ENCODE measurements at regions of chr19 and their contacts with region 1.

Region 1: DNA sequence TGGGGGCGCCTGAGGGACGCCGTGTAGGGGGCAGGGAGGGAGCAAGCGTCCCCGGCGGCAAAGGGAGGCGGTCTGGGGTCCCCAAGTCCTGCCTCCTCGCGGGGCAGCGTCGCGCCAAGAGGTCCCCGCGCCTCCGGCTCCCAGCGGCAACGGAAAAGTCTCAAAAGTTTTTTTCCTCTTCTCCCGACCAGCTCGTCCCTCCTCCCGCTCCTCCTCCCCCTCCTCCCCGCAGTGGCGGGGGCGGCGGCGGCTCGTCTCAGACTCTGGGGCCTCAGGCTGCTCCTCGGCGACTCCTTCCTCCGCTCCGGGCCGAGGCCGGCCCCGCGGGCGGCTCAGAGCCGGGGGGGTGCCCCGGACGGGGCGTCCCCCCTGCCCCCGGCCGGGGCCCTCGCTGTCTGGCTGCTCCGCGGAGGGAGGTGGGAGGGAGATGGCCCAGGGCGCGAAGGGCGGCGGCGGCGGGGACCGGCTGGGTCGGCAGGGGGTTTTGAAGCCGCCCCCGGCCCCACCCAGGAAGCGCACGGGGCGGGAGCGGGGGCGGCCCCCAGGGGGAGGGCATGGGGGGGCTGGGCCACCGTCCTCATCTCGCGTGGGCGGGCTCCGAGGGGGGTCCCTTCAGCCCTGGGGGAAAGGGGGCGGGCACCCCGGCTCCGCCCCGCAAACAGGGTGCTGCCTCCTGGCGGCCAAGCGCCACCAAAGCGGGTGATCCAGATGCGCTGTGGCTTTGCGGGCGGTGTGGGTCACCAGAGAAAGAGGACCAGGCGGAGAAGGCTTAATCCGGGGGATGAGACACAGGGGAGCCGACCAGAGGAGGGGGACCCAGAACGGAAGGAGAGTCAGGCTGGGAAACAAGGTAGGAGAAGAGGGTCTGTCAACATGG is at the start of gene TGFB1:
- DNase-seq: peak; percentile 89 to 91
- ATAC-seq: peak; percentile 59 to 85 (median 74)
- H3K4me3 ChIP-seq: peak within 1 kb of the TSS; percentile 63 to 98 (median 79)
- H3K27ac ChIP-seq: peak within 1 kb of the TSS; percentile 81 to 98 (median 92)
- H3K4me1 ChIP-seq: peaks cover 0 to 73% (median 43%) of the 10 kb centered on the region in 9 donors
- H3K27me3 ChIP-seq: peaks cover 0 to 5% (median 0%) of the 10 kb centered on the region in 7 donors
- CTCF ChIP-seq: peak; percentile 78 to 98 (median 91)
- total RNA-seq, gene TGFB1: 9.7 to 44.9 (median 13.2) TPM

Region 2: DNA sequence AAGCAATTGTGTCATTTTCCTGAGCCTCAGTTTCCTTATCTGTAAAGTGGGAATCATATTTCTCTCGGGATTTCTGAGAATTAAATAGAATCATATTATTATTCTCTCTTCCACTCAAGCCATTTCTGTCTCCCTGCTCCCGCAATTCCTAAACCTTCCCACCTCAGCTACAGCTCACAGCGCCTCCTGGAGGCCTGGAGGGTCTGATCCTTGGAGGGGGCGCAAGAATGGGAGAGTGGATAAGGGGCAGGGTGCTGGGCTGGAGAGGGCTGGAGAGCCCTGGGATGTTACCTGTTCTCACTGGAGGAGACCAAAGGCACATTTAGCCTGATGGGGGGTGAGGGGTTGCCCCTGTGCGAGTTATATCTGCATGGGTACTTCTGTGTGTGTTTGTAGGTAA is 191.8 kb before region 1 on chr19:
- intact Hi-C with region 1: no loop called
- DNase-seq: no peak
- ATAC-seq: no peak
- H3K4me3 ChIP-seq: no peak overlapping the region
- H3K27ac ChIP-seq: no peak overlapping the region
- H3K4me1 ChIP-seq: no peaks in the 10 kb centered on the region
- H3K27me3 ChIP-seq: no peaks in the 10 kb centered on the region
- CTCF ChIP-seq: peak in 1 of 9 donors; percentile 11

Region 3: GRCh38 chr19:41206926-41207750 is 146.6 kb before region 1 on chr19:
- intact Hi-C with region 1: loop called in 1 of 10 experiments (anchors 5 kb)
- DNase-seq: peak; percentile 84
- ATAC-seq: peak; percentile 75 to 92 (median 90)
- H3K4me3 ChIP-seq: peak overlapping the region in 5 of 10 donors; percentile 5 to 27 (median 19)
- H3K27ac ChIP-seq: peak overlapping the region; percentile 51 to 76 (median 70)
- H3K4me1 ChIP-seq: peaks cover 0 to 19% (median 0%) of the 10 kb centered on the region in 9 donors
- H3K27me3 ChIP-seq: no peaks in the 10 kb centered on the region
- CTCF ChIP-seq: no peak

Region 4: GRCh38 chr19:41310033-41310758 is 43.5 kb before region 1 on chr19 and contains the start of gene CCDC97:
- intact Hi-C with region 1: loop called in 6 of 10 experiments (anchors 5 kb)
- DNase-seq: peak; percentile 88 to 89
- ATAC-seq: peak; percentile 82 to 93 (median 87)
- H3K4me3 ChIP-seq: peak within 1 kb of the TSS; percentile 15 to 84 (median 70)
- H3K27ac ChIP-seq: peak within 1 kb of the TSS; percentile 89 to 99 (median 94)
- H3K4me1 ChIP-seq: peaks cover 6 to 64% (median 39%) of the 10 kb centered on the region in 9 donors
- H3K27me3 ChIP-seq: no peaks in the 10 kb centered on the region
- CTCF ChIP-seq: peak in 2 of 9 donors; percentile 8 to 14
- total RNA-seq, gene CCDC97: 12.6 to 19.2 (median 16.4) TPM

Region 5: DNA sequence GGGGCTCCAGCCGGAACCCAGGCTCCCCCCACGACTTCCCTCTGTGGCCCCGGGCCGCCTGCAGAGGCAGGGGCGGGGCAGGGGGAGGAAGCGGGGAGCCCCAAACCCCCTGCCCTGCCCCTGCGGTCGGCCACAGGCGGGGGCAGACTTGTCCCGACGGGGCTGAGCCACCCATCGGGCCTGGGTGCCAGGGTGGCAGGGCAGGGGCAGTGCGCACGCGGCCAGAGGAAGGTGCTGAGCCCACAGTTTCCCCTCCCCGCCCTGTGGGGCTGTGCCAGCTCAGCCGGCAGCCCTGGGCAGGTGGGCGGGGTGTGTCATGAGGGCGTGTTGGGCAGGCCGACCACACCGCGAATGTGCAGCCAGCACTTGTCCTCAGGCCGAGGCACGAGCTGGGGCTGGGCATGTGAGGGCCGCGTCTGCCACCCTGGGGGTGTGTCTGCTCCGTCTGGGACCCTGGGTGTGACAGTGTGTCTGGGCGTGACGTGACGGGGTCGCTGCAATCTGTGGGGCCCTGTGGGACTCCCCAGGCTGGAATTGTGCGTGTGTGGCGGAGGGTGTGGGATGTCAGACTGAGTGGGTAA is 26.0 kb before region 1 on chr19:
- intact Hi-C with region 1: loop called in 5 of 10 experiments (anchors 1 to 5 kb)
- DNase-seq: peak; percentile 76 to 79
- ATAC-seq: peak; percentile 37 to 65 (median 55)
- H3K4me3 ChIP-seq: peak overlapping the region in 9 of 10 donors; percentile 20 to 49 (median 40)
- H3K27ac ChIP-seq: peak overlapping the region; percentile 67 to 96 (median 88)
- H3K4me1 ChIP-seq: peaks cover 36 to 87% (median 62%) of the 10 kb centered on the region in 9 donors
- H3K27me3 ChIP-seq: no peaks in the 10 kb centered on the region
- CTCF ChIP-seq: peak in 1 of 9 donors; percentile 13

Region 6: GRCh38 chr19:41426952-41427646 is 73.4 kb after region 1 on chr19 and contains the start of gene B3GNT8:
- intact Hi-C with region 1: loop called in 2 of 10 experiments (anchors 5 to 10 kb)
- DNase-seq: peak; percentile 89 to 90
- ATAC-seq: peak; percentile 84 to 89 (median 86)
- H3K4me3 ChIP-seq: peak within 1 kb of the TSS; percentile 16 to 73 (median 61)
- H3K27ac ChIP-seq: peak within 1 kb of the TSS; percentile 69 to 94 (median 90)
- H3K4me1 ChIP-seq: peaks cover 12 to 93% (median 63%) of the 10 kb centered on the region in 9 donors
- H3K27me3 ChIP-seq: no peaks in the 10 kb centered on the region
- CTCF ChIP-seq: no peak
- total RNA-seq, gene B3GNT8: 6.2 to 11.7 (median 8.8) TPM

Region 7: DNA sequence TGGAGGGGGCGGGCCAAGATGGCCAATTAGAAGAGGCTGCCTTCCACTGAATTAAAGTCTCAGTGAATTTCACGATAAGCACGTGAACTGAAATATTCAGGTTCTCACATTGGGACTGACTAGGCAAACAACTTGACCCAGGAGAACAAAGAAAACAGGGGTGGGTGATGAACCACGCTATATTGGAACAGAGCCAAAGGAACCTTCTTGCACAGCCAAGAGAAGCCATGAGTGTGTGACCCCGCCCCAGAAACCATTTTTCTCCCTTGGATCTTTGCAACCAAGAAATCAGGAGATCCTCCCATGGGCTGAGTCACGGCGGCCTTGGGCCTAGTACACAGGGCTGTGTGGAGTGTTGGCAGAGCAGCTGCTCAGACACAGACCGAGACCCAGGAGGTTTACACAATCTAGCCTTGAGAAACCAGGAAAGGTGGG is 126.1 kb after region 1 on chr19:
- intact Hi-C with region 1: no loop called
- DNase-seq: peak; percentile 50 to 69
- ATAC-seq: peak; percentile 64 to 92 (median 87)
- H3K4me3 ChIP-seq: peak overlapping the region in 5 of 10 donors; percentile 25 to 51 (median 44)
- H3K27ac ChIP-seq: peak overlapping the region; percentile 34 to 87 (median 81)
- H3K4me1 ChIP-seq: peaks cover 3 to 69% (median 17%) of the 10 kb centered on the region in 9 donors
- H3K27me3 ChIP-seq: peaks cover 0 to 34% (median 6%) of the 10 kb centered on the region in 7 donors
- CTCF ChIP-seq: no peak

Measured in heart right ventricle (tissue), 16 donors.